Activated T-helper 2 cell treated with anti-CD3 and anti-CD28 coated beads, Interferon-gamma antibody, Interleukin-2, Interleukin-4, amounts not matched to agents 10 μg/mL and 5 μg/mL and 100 μg/mL, durations not matched to agents 14 hours and 24 hours and 36 hours (primary cell): ENCODE measurements at regions of chr1 and their contacts with region 1.

Region 1: GRCh38 chr1:226723657-226724532 is 15.2 kb downstream of the ITPKB start:
- DNase-seq: no peak
- H3K4me3 Mint-ChIP-seq: peak overlapping the region; percentile 64
- H3K27ac Mint-ChIP-seq: peak overlapping the region; percentile 78
- H3K4me1 Mint-ChIP-seq: peaks cover 70% of the 10 kb centered on the region
- H3K27me3 Mint-ChIP-seq: no peaks in the 10 kb centered on the region

Region 2: DNA sequence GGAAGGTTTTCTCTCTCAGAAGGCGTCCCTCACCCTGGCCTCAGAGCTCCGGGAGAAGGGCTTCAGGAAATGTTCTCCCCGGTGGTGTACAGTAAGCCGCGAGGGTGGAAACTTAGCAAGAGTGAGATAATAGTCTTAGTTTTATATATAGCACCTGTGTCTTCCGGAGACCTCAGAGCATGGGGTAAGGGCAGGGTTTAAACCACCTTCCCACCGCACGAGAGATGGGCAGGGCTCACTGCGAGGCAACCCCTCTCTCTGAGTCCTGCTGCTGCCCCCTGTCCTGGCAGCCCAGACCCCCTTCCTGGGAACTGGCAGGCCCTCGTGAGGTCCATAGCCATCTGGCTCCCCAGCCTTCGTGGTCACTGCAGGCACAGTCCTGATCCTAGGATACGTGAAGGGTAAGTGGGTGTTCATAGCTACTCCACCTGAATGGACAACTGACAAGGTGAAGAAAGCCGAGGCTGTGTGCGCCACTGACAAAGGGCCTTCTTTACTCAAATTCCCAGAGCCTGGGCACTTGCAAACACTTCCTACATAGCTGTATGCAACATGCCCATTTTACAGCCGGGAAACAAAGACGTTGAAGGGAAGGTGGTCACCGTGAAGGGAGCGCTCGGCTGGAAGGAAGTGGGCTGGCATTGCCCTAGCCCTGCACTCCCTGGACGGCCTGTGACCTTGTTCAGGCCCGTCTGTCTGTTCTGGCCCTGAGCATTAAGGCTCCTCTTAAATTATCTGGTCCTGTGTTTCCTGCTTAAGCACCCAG is 11.7 kb before region 1 on chr1:
- intact Hi-C with region 1: loop called (anchors 1 kb)
- DNase-seq: peak; percentile 62
- H3K4me3 Mint-ChIP-seq: peak overlapping the region; percentile 47
- H3K27ac Mint-ChIP-seq: peak overlapping the region; percentile 67
- H3K4me1 Mint-ChIP-seq: peaks cover 80% of the 10 kb centered on the region
- H3K27me3 Mint-ChIP-seq: no peaks in the 10 kb centered on the region

Region 3: GRCh38 chr1:226761322-226761721 is 37.4 kb after region 1 on chr1:
- intact Hi-C with region 1: no loop called
- DNase-seq: no peak
- H3K4me3 Mint-ChIP-seq: no peak overlapping the region
- H3K27ac Mint-ChIP-seq: no peak overlapping the region
- H3K4me1 Mint-ChIP-seq: peaks cover 24% of the 10 kb centered on the region
- H3K27me3 Mint-ChIP-seq: peaks cover 2% of the 10 kb centered on the region

Region 4: GRCh38 chr1:226776066-226776465 is 52.2 kb after region 1 on chr1:
- intact Hi-C with region 1: no loop called
- DNase-seq: no peak
- H3K4me3 Mint-ChIP-seq: no peak overlapping the region
- H3K27ac Mint-ChIP-seq: no peak overlapping the region
- H3K4me1 Mint-ChIP-seq: no peaks in the 10 kb centered on the region
- H3K27me3 Mint-ChIP-seq: peaks cover 14% of the 10 kb centered on the region

Region 5: GRCh38 chr1:226786550-226786949 is 62.7 kb after region 1 on chr1:
- intact Hi-C with region 1: no loop called
- DNase-seq: no peak
- H3K4me3 Mint-ChIP-seq: no peak overlapping the region
- H3K27ac Mint-ChIP-seq: no peak overlapping the region
- H3K4me1 Mint-ChIP-seq: peaks cover 7% of the 10 kb centered on the region
- H3K27me3 Mint-ChIP-seq: peaks cover 20% of the 10 kb centered on the region